ENCODE measurements at regions of chr1 and their contacts with region 1.

Region 1: DNA sequence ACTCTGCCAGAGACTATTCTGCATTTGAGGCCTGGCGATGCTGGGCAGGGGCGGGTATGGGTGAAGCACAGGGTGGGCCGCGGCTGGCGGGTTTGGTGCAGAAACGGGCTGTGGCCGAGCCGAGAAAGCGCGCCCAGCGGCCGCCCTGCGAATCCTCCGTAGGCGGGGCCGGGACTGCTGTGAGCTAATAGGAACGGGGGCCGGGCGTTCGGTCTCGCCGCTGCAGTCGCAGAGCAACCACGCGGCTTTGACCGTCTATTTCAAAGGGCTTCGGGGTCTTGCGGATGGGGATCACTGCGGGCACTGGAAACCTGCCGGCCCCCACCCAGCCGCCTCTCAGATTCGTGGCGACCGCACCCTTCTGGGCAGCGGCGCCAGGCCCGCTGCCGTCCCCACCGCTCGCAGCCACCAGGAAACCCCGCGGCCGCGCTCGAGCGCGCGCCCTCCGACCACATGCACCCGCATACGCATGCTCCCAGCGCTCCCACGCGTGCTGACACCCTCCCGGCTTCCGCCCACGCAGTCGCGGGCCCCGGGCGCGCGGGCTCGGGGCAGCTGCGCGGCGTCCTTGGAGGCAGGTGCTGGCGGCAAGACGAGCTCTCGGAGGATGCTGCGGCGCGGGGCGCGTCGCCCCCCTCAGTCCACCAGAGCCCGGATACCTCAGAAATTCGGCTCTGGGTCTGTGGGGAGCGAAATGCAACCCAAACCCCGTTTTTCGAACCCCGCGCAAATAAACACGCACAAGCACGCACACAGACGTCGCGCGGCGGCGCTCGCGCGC is 32.6 kb downstream of the DNTTIP2 start:
- DNase-seq: peak; percentile 93

Region 2: GRCh38 chr1:93078986-93079654 is 767.3 kb before region 1 on chr1 and contains the start of gene MTF2:
- intact Hi-C with region 1: loop called (anchors 10 kb)
- DNase-seq: peak; percentile 97
- total RNA-seq, gene MTF2: 7.0 TPM

Region 3: DNA sequence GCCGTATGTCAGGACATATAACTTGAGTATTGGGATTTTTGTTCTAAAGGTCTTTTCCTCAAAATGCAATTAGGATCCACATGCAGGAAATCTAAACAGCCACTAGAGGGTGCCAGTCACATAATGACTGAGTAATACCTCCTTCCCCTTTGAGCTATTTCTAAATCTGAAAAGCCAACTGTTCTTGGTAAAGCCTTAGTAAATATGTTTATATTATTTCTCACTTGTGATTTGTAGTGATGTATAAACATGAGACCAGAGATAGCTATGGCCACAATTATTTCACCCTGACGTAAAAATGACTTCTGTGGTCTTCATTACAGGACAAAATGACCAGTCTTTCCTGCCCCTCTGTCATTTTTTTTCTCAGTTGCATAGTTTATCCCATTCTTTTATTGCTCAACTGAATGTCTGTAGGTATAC is 541.7 kb before region 1 on chr1:
- intact Hi-C with region 1: loop called (anchors 10 kb)
- DNase-seq: no peak

Region 4: GRCh38 chr1:93437976-93438605 is 408.3 kb before region 1 on chr1:
- intact Hi-C with region 1: loop called (anchors 2 kb)
- DNase-seq: no peak

Region 5: GRCh38 chr1:93680757-93681550 is 165.4 kb before region 1 on chr1:
- intact Hi-C with region 1: loop called (anchors 2 kb)
- DNase-seq: peak; percentile 85

Measured in cardiac septum (tissue), 1 donor.